ACHN (cell line): ENCODE measurements at regions of chr2 and their contacts with region 1.

Region 1: GRCh38 chr2:170815746-170816503 is 762 bp upstream of the GAD1 start:
- DNase-seq: peak; percentile 76

Region 2: DNA sequence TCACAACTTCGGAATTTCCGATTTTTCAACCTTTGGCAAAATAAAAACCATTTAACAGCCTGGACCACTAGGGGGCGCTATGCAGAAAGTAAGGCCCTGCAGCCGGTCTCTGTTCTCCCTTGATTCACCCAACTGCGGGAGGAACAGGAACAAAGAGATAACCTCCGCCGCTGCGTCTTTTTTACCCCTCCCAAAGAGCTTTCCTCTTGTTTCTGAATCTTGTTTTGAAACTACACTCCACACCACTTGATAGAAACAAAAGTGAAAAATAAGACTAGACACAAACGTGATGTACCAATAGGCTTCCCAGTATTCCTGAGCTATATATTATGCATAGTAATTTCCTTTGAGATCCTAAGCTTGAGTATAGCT is 406.8 kb before region 1 on chr2:
- in situ Hi-C with region 1: loop called (anchors 25 kb)
- DNase-seq: peak; percentile 70

Region 3: GRCh38 chr2:170651624-170652325 is 164.2 kb before region 1 on chr2:
- in situ Hi-C with region 1: no loop called
- DNase-seq: no peak